SK-N-SH (cell line): ENCODE measurements at regions of chr6 and their contacts with region 1.

Region 1: GRCh38 chr6:2931970-2932748 is 29.1 kb upstream of the SERPINB9 start:
- DNase-seq: peak; percentile 86
- H3K4me3 ChIP-seq: peak overlapping the region in 1 of 2 experiments; percentile 38; a peak in 1 of 4 replicates
- H3K27ac ChIP-seq: no peak overlapping the region
- H3K4me1 ChIP-seq: peaks cover 0 to 4% of the 10 kb centered on the region in 2 experiments; a peak in 1 of 4 replicates
- H3K27me3 ChIP-seq: no peaks in the 10 kb centered on the region
- CTCF ChIP-seq: peak; percentile 97
- EP300 ChIP-seq: no peak
- RAD21 ChIP-seq: peak; percentile 91

Region 2: DNA sequence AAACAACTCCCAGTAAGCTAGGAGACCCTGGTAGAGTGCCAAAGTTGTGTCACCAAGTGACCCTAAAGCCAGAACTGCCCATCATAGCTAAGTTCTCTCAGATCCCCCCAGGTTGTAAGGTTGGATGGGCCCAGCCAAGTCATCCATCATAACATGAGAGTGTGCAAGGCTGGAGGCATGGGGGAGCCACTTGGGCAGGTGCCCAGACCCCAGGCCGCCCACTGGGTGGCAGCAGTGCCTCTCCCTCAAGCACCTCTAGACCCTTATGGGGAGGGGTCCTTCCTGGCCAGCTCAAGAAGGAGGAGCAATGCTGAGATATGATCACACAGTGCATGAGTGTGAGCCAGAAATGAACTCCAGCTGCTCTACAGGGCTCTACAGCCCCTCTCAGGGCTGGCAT is 335.9 kb before region 1 on chr6:
- CTCF ChIA-PET with region 1: no interaction called
- POLR2A ChIA-PET with region 1: no interaction called
- DNase-seq: peak; percentile 55
- H3K4me3 ChIP-seq: no peak overlapping the region
- H3K27ac ChIP-seq: no peak overlapping the region
- H3K4me1 ChIP-seq: no peaks in the 10 kb centered on the region
- H3K27me3 ChIP-seq: no peaks in the 10 kb centered on the region; the same call in 1 of the 2 replicates
- CTCF ChIP-seq: peak; percentile 23; the same call in 1 of the 2 replicates
- EP300 ChIP-seq: no peak
- RAD21 ChIP-seq: peak; percentile 31

Region 3: DNA sequence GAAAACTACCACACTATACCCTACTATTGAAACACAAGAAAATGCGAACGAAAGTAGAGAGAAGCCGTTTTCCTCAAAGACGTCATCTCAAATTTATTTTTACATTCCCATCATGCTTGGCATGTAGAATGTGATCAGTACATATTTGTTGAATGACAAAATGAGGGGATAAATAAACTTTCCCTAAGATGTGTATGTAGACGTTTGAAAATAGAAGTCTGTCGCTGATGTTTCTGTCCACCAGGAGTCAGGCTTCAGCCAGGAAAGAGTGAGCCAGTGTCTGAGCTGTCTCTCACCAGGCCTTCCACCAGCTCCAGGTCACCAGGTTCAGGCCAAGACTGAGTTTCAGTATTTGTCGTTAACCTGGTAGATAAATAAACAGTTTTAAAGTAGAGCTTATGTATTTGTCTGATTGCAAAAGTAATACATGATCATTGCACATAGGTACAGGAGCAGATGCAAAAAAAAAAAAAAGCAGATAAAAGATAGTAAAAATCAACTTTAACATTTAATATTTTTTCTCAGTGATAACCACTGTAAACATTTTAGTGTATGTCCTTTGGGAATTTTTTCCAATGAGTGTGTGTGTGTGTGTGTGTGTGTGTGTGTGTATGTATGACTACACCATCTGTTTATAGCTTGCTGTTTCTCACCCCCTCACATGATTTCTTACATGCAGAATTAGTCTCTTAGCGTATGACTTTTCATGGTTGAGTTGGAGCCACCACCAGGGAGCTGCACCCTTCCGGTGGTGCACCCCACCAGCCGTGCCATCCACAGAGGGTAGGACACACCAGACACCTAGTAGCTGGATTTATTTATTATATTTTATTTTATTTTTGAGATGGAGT is 140.8 kb before region 1 on chr6:
- CTCF ChIA-PET with region 1: interaction called, 56 read pairs
- POLR2A ChIA-PET with region 1: no interaction called
- DNase-seq: peak; percentile 77
- H3K4me3 ChIP-seq: no peak overlapping the region
- H3K27ac ChIP-seq: peak overlapping the region; percentile 11 to 67; a peak in 3 of 4 replicates
- H3K4me1 ChIP-seq: peaks cover 4 to 9% of the 10 kb centered on the region in 2 experiments; a peak in 2 of 4 replicates
- H3K27me3 ChIP-seq: no peaks in the 10 kb centered on the region
- CTCF ChIP-seq: peak; percentile 80
- EP300 ChIP-seq: no peak
- RAD21 ChIP-seq: peak; percentile 93

Region 4: DNA sequence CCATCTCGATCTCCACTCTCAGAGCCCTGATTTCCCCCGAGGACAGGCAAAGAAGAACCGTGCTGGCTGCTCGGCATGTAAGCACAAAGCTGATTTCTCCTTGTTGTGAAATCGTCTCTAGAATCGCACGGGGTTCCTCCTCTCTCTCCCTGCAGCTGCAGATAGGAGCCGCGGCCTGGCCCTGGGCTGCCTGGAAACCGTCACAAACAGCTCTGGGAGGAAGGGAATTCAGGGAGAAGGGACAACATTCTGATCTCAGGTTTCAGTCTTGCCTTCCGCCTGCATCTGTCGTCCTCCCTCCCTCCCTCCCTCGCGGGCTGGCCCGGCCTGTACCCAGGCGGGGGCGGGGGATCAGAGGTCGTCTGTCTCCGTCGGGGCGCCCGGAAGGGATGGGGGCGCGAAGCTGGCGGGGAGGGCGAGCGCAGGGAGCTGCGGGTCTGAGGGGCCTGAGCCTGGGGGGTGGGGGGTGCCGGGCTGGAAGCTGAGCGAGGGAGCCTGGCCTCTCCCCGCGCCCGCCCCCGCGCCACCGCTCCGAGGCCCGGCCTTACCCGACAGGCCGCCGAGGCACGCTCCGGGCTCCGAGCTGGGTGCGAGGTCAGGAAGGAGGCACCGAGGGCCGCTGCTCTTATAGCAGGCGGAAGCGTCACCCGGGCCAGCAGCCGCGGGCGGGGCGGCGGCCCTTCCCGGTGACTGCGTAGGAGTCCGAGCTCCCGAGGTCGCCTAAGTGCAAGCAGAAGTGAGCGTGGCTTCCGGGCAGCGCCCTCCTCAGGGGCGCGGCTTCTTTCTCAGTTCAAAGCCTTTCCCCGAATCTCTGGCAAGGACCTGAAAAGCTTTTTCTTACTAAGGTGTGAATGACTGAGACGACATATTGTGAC is 90.7 kb before region 1 on chr6 and contains the start of gene SERPINB1:
- CTCF ChIA-PET with region 1: interaction called, 261 read pairs
- POLR2A ChIA-PET with region 1: no interaction called
- DNase-seq: peak; percentile 82
- H3K4me3 ChIP-seq: peak within 1 kb of the TSS; percentile 45 to 47
- H3K27ac ChIP-seq: peak within 1 kb of the TSS; percentile 67 to 87
- H3K4me1 ChIP-seq: peaks cover 25 to 26% of the 10 kb centered on the region in 2 experiments; a peak in 3 of 4 replicates
- H3K27me3 ChIP-seq: no peaks in the 10 kb centered on the region
- CTCF ChIP-seq: no peak
- EP300 ChIP-seq: no peak
- RAD21 ChIP-seq: no peak
- polyA plus RNA-seq, gene SERPINB1: 9.4 and 10.9 TPM in 2 replicates

Region 5: DNA sequence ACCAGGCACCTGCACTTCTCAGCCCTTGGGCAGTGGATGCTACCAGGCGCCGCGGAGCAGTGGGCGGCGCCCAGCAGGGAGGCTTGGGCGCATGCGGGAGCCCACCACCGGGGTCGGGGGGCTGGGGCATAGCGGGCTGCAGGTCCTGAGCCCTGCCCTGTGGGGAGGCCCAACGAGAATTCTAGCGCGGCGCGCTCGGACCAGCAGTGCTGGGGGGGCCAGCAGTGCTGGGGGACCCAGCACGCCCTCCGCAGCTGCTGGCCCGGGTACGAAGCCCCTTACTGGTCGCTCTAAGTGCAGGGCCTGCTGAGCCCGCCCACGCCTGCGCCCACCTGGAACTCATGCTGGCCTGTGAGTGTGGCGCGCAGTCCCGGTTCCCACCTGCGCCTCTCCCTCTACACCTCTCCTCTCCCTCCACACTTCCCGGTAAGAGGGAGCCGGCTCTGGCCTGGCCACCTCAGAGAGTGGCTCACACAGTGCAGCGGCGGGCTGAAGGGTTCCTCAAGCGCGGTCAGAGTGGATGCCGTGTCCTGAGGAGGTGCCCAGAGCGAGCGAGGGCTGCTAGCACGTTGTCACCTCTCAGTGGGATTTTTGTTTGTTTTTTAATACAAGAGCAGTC is 62.0 kb before region 1 on chr6:
- CTCF ChIA-PET with region 1: interaction called, 17 read pairs
- POLR2A ChIA-PET with region 1: no interaction called
- DNase-seq: no peak
- H3K4me3 ChIP-seq: no peak overlapping the region
- H3K27ac ChIP-seq: no peak overlapping the region
- H3K4me1 ChIP-seq: no peaks in the 10 kb centered on the region; a peak in 1 of 4 replicates
- H3K27me3 ChIP-seq: no peaks in the 10 kb centered on the region
- CTCF ChIP-seq: no peak
- EP300 ChIP-seq: no peak
- RAD21 ChIP-seq: no peak

Region 6: GRCh38 chr6:2876210-2877056 is 55.7 kb before region 1 on chr6:
- CTCF ChIA-PET with region 1: interaction called, 13 read pairs
- POLR2A ChIA-PET with region 1: no interaction called
- DNase-seq: peak; percentile 79
- H3K4me3 ChIP-seq: peak overlapping the region in 1 of 2 experiments; percentile 47; a peak in 2 of 4 replicates
- H3K27ac ChIP-seq: no peak overlapping the region
- H3K4me1 ChIP-seq: peaks cover 0 to 7% of the 10 kb centered on the region in 2 experiments; a peak in 2 of 4 replicates
- H3K27me3 ChIP-seq: no peaks in the 10 kb centered on the region; the same call in 1 of the 2 replicates
- CTCF ChIP-seq: no peak
- EP300 ChIP-seq: no peak
- RAD21 ChIP-seq: no peak

Region 7: GRCh38 chr6:2917065-2917464 is 15.1 kb before region 1 on chr6:
- CTCF ChIA-PET with region 1: interaction called, 24 read pairs
- POLR2A ChIA-PET with region 1: no interaction called
- DNase-seq: no peak
- H3K4me3 ChIP-seq: no peak overlapping the region
- H3K27ac ChIP-seq: no peak overlapping the region
- H3K4me1 ChIP-seq: no peaks in the 10 kb centered on the region
- H3K27me3 ChIP-seq: no peaks in the 10 kb centered on the region; the same call in 1 of the 2 replicates
- CTCF ChIP-seq: no peak; the same call in 1 of the 2 replicates
- EP300 ChIP-seq: no peak
- RAD21 ChIP-seq: no peak